ENCODE measurements at regions of chr2 and their contacts with region 1.

Region 1: DNA sequence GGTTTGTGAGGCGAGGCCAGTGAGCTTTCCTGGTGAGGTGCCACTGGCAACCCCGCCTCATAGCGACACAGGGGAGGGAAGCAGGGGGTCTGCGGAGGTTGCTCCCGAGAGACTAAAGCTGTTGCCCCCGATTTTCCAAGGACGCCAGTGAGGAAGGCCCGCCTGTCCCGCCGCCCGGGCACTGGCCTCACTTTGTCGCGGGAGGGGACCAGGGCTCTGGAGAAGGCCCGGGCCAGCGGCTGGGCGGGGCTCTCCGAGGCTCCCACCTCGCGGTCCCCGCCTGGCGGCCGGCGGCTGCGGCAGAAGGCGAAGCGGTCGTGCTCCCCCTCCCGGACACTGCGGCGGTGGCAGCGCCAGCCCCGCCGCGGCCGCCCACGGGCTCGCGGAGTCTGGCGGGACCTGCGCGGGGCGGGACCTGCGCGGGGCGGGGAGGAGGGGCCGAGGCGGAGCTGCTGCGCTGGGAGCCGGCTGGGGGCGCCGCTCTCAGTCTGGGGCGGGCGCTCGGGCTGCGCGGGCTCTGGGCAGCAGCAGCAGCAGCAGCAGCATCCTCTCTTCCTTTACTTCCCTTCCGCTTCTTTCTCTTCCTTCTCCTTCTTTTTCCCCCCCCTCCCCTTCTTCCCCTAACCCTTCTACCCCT is at the start of gene MAP2:
- DNase-seq: no peak
- ATAC-seq: peak; percentile 97
- H3K4me3 ChIP-seq: peak within 1 kb of the TSS; percentile 86 to 90
- H3K27ac ChIP-seq: peak within 1 kb of the TSS; percentile 81
- H3K4me1 ChIP-seq: peaks cover 10% of the 10 kb centered on the region
- H3K27me3 ChIP-seq: no peaks in the 10 kb centered on the region
- CTCF ChIP-seq: peak; percentile 99
- total RNA-seq, gene MAP2: 44.9 TPM

Region 2: DNA sequence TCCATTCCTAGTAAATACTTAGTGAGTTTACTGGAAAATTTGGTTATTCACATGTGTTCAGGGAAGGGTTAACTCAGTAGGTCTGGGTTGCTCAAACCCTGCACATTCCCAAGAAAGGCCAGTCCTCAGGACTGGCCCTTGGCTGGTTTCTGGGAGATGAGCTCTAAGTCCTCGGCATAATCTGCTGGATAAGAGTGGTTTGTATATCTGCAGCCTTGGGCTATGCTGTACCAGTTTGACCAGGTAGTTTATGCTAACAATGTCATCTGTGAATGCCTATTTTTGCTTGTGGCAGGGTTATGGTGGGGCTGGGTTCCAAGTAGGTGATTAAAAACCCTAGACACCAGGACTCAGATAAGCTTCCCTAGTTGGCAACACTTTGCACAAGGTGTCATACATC is 1024.5 kb before region 1 on chr2:
- CTCF ChIA-PET with region 1: no interaction called
- POLR2A ChIA-PET with region 1: no interaction called
- in situ Hi-C with region 1: no loop called
- intact Hi-C with region 1: loop called (anchors 5 kb)
- DNase-seq: no peak
- ATAC-seq: no peak
- H3K4me3 ChIP-seq: no peak overlapping the region
- H3K27ac ChIP-seq: no peak overlapping the region
- H3K4me1 ChIP-seq: no peaks in the 10 kb centered on the region
- H3K27me3 ChIP-seq: peaks cover 15% of the 10 kb centered on the region
- CTCF ChIP-seq: no peak

Region 3: DNA sequence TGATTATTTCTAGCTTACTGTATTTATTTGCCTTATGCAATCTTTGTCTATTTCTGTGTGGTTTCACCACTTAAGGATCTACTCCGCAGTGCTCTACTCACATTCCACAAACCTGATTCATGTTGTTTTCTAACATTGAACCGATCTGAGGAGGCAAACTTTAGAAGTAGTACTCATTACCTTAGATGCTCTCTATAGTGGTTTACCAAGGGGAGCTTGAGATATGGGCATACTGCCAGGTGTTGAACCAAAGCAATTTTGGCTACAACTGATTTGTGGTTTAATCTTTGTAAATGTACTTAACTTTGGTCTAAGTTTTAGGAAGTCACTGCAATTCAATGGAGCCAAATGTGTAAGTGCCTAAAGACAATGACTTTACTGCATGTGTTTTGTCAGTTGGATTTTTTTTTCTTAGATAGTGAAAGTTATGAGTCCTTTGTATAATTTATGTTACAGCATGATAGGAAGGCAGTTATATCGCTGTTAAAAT is 50.3 kb after region 1 on chr2:
- CTCF ChIA-PET with region 1: no interaction called
- POLR2A ChIA-PET with region 1: no interaction called
- in situ Hi-C with region 1: no loop called
- intact Hi-C with region 1: no loop called
- DNase-seq: peak; percentile 57
- ATAC-seq: peak; percentile 91
- H3K4me3 ChIP-seq: no peak overlapping the region
- H3K27ac ChIP-seq: peak overlapping the region; percentile 25; the same call in 1 of the 2 replicates
- H3K4me1 ChIP-seq: peaks cover 28% of the 10 kb centered on the region
- H3K27me3 ChIP-seq: no peaks in the 10 kb centered on the region
- CTCF ChIP-seq: no peak

Region 4: GRCh38 chr2:209536363-209536762 is 112.7 kb after region 1 on chr2:
- CTCF ChIA-PET with region 1: no interaction called
- POLR2A ChIA-PET with region 1: interaction called, 13 read pairs
- in situ Hi-C with region 1: no loop called
- intact Hi-C with region 1: no loop called
- DNase-seq: no peak
- ATAC-seq: no peak
- H3K4me3 ChIP-seq: no peak overlapping the region
- H3K27ac ChIP-seq: no peak overlapping the region
- H3K4me1 ChIP-seq: no peaks in the 10 kb centered on the region
- H3K27me3 ChIP-seq: no peaks in the 10 kb centered on the region
- CTCF ChIP-seq: no peak

Region 5: DNA sequence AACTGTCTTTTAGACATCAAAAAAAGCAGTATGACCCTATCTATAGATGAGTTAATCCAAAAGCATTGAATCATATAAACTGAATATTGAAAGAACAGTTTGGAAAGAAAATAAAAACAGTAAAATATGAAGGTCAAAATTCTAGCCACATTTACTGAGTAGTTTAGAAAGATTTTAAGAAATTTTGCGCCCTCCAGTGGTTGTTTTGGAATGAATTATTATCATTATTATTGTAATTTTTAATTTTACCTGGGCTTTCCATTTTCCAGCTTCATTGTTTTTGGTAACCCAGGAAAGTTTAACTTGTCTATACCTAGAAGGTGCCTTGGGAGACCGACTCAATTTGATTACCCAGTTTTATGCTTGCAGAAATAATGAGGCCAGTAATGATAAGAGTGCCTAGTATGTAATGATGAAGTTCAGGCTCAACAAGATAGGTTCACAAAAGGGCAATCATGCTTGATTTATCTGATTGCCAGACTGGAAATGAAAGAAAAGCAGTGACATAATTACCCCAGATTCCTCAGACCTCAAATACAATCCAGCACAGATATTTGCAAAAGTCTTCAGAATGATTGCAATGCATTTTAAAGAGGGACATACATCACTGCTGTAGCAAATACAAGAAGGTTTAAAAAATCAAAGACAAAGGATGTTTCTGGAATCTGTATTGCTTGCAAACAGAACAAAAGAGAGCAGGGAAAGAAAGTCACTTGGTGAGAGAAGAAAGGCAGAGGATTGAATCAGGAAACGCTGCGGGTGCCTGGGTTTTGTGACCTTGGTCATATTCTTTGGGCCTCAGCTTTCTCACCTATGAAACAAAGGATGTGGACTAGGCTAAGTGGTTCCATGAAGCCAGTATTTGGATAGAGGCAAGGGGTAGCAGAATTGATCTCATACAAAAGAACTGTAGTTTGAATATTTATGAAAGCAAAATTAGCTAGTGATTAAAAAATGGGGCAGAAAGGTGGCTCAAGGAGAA is 154.0 kb after region 1 on chr2:
- CTCF ChIA-PET with region 1: interaction called, 6 read pairs
- POLR2A ChIA-PET with region 1: no interaction called
- in situ Hi-C with region 1: no loop called
- intact Hi-C with region 1: loop called (anchors 1 kb)
- DNase-seq: no peak
- ATAC-seq: no peak
- H3K4me3 ChIP-seq: no peak overlapping the region
- H3K27ac ChIP-seq: peak overlapping the region; percentile 51; the same call in 1 of the 2 replicates
- H3K4me1 ChIP-seq: peaks cover 6% of the 10 kb centered on the region; the same call in 1 of the 2 replicates
- H3K27me3 ChIP-seq: no peaks in the 10 kb centered on the region
- CTCF ChIP-seq: peak; percentile 55; the same call in 1 of the 2 replicates

Region 6: DNA sequence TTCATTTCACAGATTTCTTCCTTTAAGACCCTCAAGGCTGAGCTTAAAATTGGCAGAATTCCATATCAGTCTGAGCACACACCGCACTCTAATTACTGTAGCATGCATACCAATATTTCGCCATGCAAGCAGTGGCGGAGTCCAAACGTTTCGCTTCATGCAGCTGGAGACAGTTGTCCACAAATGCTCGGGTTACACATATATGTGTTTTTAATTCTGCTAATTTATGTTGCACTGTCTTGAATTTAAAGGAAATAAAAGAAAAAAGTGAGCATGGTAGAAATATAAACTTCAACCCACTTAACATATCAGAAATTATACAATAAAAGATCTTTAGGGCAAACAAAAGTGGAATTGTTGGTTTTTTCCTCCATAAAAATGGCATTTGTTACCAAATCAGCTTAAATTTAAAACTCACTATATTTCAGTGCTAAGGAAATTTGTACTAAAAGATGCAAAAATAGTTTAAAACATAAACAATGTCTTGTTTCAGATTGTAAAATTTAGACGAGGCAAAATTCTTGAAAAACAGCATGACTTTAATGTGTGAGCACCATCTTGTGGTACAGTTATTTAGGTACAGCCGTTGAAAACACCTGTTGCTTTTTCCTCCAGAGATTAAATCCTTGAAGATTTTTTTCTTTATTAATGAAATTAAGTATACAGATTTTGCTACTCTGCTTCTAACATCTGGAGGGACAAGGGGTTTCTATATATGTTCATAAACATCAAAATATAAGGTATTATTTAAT is 771.6 kb after region 1 on chr2:
- CTCF ChIA-PET with region 1: no interaction called
- POLR2A ChIA-PET with region 1: no interaction called
- in situ Hi-C with region 1: no loop called
- intact Hi-C with region 1: loop called (anchors 10 kb)
- DNase-seq: peak; percentile 30
- ATAC-seq: peak; percentile 73; the same call in 1 of the 2 replicates
- H3K4me3 ChIP-seq: peak overlapping the region in 1 of 2 experiments; percentile 19; a peak in 1 of 4 replicates
- H3K27ac ChIP-seq: no peak overlapping the region
- H3K4me1 ChIP-seq: no peaks in the 10 kb centered on the region
- H3K27me3 ChIP-seq: no peaks in the 10 kb centered on the region; the same call in 1 of the 2 replicates
- CTCF ChIP-seq: peak; percentile 69; the same call in 1 of the 2 replicates

Measured in Panc1 (cell line).